Esophagus squamous epithelium (tissue), 5 donors: ENCODE measurements at regions of chr19 and their contacts with region 1.

Region 1: GRCh38 chr19:2135474-2136402 is 15.6 kb downstream of the AP3D1 start:
- DNase-seq: no peak
- H3K4me3 ChIP-seq: no peak overlapping the region
- H3K27ac ChIP-seq: no peak overlapping the region
- H3K4me1 ChIP-seq: no peaks in the 10 kb centered on the region
- H3K27me3 ChIP-seq: no peaks in the 10 kb centered on the region
- CTCF ChIP-seq: no peak
- POLR2A ChIP-seq: no peak

Region 2: GRCh38 chr19:1956868-1957492 is 178.8 kb before region 1 on chr19:
- intact Hi-C with region 1: loop called (anchors 10 kb)
- DNase-seq: no peak
- H3K4me3 ChIP-seq: no peak overlapping the region
- H3K27ac ChIP-seq: no peak overlapping the region
- H3K4me1 ChIP-seq: peaks cover 0 to 8% (median 0%) of the 10 kb centered on the region in 3 donors
- H3K27me3 ChIP-seq: no peaks in the 10 kb centered on the region
- CTCF ChIP-seq: no peak
- POLR2A ChIP-seq: no peak

Region 3: GRCh38 chr19:2171349-2172145 is 35.8 kb after region 1 on chr19:
- intact Hi-C with region 1: no loop called
- DNase-seq: no peak
- H3K4me3 ChIP-seq: no peak overlapping the region
- H3K27ac ChIP-seq: peak overlapping the region in 3 of 4 donors; percentile 21 to 87 (median 25)
- H3K4me1 ChIP-seq: peaks cover 54 to 82% (median 62%) of the 10 kb centered on the region in 3 donors
- H3K27me3 ChIP-seq: no peaks in the 10 kb centered on the region
- CTCF ChIP-seq: peak in 1 of 6 experiments; percentile 6
- POLR2A ChIP-seq: no peak